Left ventricle myocardium inferior (tissue), 1 donor: ENCODE measurements at regions of chr17 and their contacts with region 1.

Region 1: GRCh38 chr17:846901-847843 is 65.0 kb downstream of the MRM3 start:
- DNase-seq: no peak
- H3K4me3 ChIP-seq: peak overlapping the region; percentile 59
- H3K27ac ChIP-seq: peak overlapping the region; percentile 89
- H3K4me1 ChIP-seq: peaks cover 41% of the 10 kb centered on the region
- H3K27me3 ChIP-seq: no peaks in the 10 kb centered on the region
- CTCF ChIP-seq: no peak

Region 2: GRCh38 chr17:915538-916201 is 68.5 kb after region 1 on chr17:
- intact Hi-C with region 1: loop called (anchors 10 kb)
- DNase-seq: no peak
- H3K4me3 ChIP-seq: peak overlapping the region; percentile 32
- H3K27ac ChIP-seq: peak overlapping the region; percentile 84
- H3K4me1 ChIP-seq: peaks cover 34% of the 10 kb centered on the region
- H3K27me3 ChIP-seq: no peaks in the 10 kb centered on the region
- CTCF ChIP-seq: no peak